Activated naive CD4-positive, alpha-beta T cell treated with anti-CD3 and anti-CD28 coated beads for 36 hours (primary cell): ENCODE measurements at regions of chr10 and their contacts with region 1.

Region 1: GRCh38 chr10:114239117-114239993 is at the start of gene VWA2:
- DNase-seq: peak; percentile 55
- H3K4me3 Mint-ChIP-seq: peak within 1 kb of the TSS; percentile 43
- H3K27ac Mint-ChIP-seq: no peak within 1 kb of the TSS
- H3K4me1 Mint-ChIP-seq: peaks cover 8% of the 10 kb centered on the region
- H3K27me3 Mint-ChIP-seq: peaks cover 52% of the 10 kb centered on the region
- total RNA-seq, gene VWA2: not detected

Region 2: GRCh38 chr10:113802997-113803396 is 436.4 kb before region 1 on chr10:
- CTCF ChIA-PET with region 1: no interaction called
- intact Hi-C with region 1: loop called (anchors 2 kb)
- DNase-seq: no peak
- H3K4me3 Mint-ChIP-seq: no peak overlapping the region
- H3K27ac Mint-ChIP-seq: no peak overlapping the region
- H3K4me1 Mint-ChIP-seq: no peaks in the 10 kb centered on the region
- H3K27me3 Mint-ChIP-seq: peaks cover 10% of the 10 kb centered on the region

Region 3: DNA sequence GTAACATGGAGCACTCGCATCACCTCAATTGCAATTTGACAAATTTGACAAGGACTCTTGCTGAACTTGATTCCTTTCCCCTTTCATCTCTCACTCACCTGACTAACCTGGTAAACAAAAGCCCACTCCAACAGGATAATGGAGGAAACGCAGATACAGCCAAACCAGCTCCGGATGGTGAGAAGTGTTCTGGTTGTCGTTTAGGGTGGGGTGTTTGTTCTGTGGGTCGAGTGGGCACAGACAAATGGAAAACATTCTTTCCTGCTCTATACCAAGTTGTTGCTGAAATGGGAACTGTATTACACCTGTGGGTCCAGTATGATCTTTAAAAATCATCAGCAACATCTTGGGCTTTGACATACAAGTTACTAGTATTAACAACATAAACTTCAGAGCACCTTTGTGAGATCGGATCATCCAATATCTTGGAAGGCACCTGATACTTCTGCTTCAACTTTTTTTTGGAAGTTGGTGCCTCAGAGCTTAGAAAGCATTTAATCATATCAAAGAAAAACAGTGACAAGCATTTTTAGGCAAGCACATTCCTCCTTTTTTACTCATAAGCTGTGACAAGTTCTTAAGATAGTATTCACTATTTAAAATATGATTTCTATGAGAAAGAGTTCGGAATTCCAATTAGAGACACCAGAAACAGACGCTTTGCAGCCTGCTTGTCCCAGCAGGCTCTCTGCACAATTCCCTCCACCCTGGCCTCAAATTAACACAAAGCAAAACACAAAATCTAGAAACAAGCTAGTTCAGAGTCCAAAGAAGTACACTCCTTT is 123.5 kb before region 1 on chr10:
- CTCF ChIA-PET with region 1: no interaction called
- intact Hi-C with region 1: loop called (anchors 5 kb)
- DNase-seq: no peak
- H3K4me3 Mint-ChIP-seq: no peak overlapping the region
- H3K27ac Mint-ChIP-seq: no peak overlapping the region
- H3K4me1 Mint-ChIP-seq: no peaks in the 10 kb centered on the region
- H3K27me3 Mint-ChIP-seq: no peaks in the 10 kb centered on the region